Ascending aorta (tissue), 2 donors: ENCODE measurements at regions of chr7 and their contacts with region 1.

Region 1: DNA sequence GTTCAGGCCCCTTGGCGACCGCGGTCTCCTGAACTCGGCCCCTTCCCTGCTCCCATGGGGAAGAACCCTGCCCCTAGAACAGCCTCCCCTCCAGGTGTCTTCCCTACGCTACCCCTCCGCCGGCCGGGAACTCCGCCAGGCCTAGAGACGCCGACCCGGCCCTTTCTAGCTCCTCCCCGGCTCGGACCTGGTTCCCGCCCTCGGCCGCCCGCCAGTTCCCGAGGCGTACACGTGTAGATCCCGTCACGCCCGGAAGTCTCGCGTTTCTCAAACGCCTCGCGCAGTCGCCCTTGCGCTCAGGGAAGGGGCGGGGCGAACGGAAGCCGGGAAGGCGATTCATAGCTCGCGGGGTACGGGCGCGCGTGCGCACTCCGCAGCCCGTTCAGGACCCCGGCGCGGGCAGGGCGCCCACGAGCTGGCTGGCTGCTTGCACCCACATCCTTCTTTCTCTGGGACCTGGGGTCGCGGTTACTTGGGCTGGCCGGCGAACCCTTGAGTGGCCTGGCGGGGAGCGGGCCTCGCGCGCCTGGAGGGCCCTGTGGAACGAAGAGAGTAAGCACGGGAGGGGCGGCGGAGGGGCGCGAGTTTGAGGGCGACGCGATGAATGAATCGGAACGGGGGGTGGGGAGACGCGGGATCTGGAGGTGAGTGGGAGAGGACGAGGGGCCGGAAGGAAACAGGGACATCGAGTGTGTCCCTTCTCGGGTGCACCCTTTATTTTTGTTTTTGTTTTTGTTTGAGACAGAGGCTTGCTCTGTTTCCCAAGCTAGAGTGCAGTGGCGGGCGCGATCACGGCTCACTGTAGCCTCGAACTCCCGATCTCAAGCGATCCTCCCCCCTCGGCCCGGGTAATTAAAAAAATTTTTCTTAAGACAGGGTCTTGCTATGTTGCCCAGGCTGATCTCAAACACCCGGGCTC is at the start of gene POP7:
- DNase-seq: peak; percentile 88 to 99
- H3K4me3 ChIP-seq: peak within 1 kb of the TSS; percentile 89 to 99
- H3K27ac ChIP-seq: peak within 1 kb of the TSS; percentile 90 to 96
- H3K4me1 ChIP-seq: peaks cover 7 to 10% of the 10 kb centered on the region in 2 donors
- H3K27me3 ChIP-seq: no peaks in the 10 kb centered on the region
- CTCF ChIP-seq: no peak
- total RNA-seq, gene POP7: 44.0 TPM

Region 2: DNA sequence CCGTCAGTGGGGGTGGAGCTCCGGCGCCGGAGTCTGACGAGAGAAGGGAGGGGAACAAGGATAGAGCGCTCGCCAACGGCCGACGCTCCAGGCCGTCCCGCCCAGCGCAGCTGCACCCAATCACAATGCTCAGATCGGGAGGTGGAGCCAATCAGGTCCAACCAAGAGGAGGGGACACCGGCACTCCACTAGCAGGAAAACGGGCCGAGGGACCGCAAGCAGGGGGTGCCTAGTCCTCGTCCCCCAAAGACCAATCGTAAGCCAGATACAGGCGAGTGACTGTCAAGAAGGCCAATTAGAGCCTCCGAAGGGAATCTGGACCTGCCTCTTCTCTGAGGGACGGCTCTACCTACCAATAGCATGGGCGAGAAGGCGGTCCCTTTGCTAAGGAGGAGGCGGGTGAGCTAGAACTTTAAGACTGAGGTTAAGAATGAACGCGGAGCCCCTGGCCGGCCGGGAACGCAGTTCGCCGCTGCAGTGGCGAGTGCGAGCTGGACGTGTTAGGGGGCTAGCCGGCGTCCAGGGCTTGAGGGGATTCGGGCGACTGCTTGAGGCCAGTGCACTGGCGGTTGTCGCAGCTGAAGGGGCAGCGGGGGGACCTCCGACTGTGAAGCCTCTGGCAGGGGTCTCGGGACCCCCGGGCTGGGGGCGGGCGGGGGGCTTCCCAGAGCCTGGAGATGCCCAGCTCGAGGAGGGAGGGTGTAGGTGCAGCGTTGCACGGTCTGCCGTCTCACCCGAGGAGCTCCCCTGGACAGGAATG is 119.6 kb before region 1 on chr7 and contains the start of gene FBXO24:
- intact Hi-C with region 1: loop called (anchors 1 kb)
- DNase-seq: peak; percentile 99 to 100
- H3K4me3 ChIP-seq: peak within 1 kb of the TSS; percentile 82 to 84
- H3K27ac ChIP-seq: peak within 1 kb of the TSS; percentile 84 to 87
- H3K4me1 ChIP-seq: peaks cover 0 to 25% of the 10 kb centered on the region in 2 donors
- H3K27me3 ChIP-seq: no peaks in the 10 kb centered on the region
- CTCF ChIP-seq: no peak
- total RNA-seq, gene FBXO24: not detected

Region 3: GRCh38 chr7:100726996-100727761 is 21.2 kb after region 1 on chr7:
- intact Hi-C with region 1: loop called (anchors 1 kb)
- DNase-seq: no peak
- H3K4me3 ChIP-seq: no peak overlapping the region
- H3K27ac ChIP-seq: no peak overlapping the region
- H3K4me1 ChIP-seq: no peaks in the 10 kb centered on the region
- H3K27me3 ChIP-seq: no peaks in the 10 kb centered on the region
- CTCF ChIP-seq: no peak

Region 4: DNA sequence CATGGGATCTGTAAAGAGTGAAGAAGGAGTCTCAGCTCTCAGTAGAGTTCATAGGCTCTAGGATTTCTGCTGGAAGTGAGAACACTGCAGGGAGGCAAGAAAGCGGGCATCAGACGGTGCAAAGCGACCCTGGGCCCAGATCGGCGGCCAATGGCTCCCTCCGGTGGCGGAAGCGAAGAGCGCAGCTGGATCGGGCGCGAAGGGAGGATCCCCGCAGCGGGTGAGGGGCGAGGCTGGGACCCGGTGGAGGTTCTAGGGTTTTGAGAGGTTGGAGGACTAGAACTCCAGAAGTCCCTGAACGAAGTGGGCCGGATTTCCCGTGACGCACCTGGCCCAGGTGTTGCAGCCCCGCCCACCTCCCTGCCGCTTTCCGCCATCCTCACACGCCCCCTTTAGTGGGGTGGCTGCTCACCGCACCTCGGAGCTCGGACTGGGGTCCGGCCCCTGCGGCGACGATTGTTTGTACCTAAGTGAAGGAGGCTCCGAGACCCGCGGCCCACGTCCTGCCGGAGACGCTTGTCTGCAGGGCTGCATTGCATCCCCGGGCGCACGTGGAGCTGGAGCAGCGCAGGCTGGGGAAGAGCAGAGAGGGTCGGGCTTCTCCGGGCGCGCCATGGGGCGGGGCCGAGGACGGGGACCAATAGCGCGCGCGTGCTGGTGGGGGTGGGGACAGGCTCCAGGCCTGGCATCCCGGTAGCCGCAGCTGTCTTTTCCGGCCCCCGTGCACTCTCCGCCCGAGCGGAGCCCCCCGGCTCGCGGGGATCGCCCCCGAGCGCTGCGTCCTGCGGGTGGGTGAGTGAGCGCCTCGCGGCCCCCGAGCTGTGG is 146.2 kb after region 1 on chr7 and contains the start of gene SLC12A9:
- intact Hi-C with region 1: loop called (anchors 1 kb)
- DNase-seq: peak; percentile 55 to 93
- H3K4me3 ChIP-seq: peak within 1 kb of the TSS; percentile 69 to 82
- H3K27ac ChIP-seq: peak within 1 kb of the TSS; percentile 77 to 85
- H3K4me1 ChIP-seq: peaks cover 3 to 8% of the 10 kb centered on the region in 2 donors
- H3K27me3 ChIP-seq: no peaks in the 10 kb centered on the region
- CTCF ChIP-seq: peak; percentile 90 to 93 (median 90)
- total RNA-seq, gene SLC12A9: 19.4 TPM

Region 5: GRCh38 chr7:100929780-100930135 is 223.7 kb after region 1 on chr7:
- intact Hi-C with region 1: no loop called
- DNase-seq: no peak
- H3K4me3 ChIP-seq: no peak overlapping the region
- H3K27ac ChIP-seq: no peak overlapping the region
- H3K4me1 ChIP-seq: no peaks in the 10 kb centered on the region
- H3K27me3 ChIP-seq: no peaks in the 10 kb centered on the region
- CTCF ChIP-seq: no peak

Region 6: GRCh38 chr7:101244375-101245146 is 538.5 kb after region 1 on chr7 and contains the start of gene FIS1:
- intact Hi-C with region 1: loop called (anchors 10 kb)
- DNase-seq: peak; percentile 76 to 95
- H3K4me3 ChIP-seq: peak within 1 kb of the TSS; percentile 77 to 94
- H3K27ac ChIP-seq: peak within 1 kb of the TSS; percentile 95 to 97
- H3K4me1 ChIP-seq: peaks cover 0 to 14% of the 10 kb centered on the region in 2 donors
- H3K27me3 ChIP-seq: no peaks in the 10 kb centered on the region
- CTCF ChIP-seq: peak; percentile 92 to 95 (median 95)
- total RNA-seq, gene FIS1: 266 TPM